ENCODE measurements at regions of chr14 and their contacts with region 1.

Region 1: GRCh38 chr14:99480917-99481744 is at the start of gene CCNK:
- DNase-seq: peak; percentile 100
- ATAC-seq: peak; percentile 93
- H3K4me3 Mint-ChIP-seq: peak within 1 kb of the TSS; percentile 96
- H3K27ac Mint-ChIP-seq: peak within 1 kb of the TSS; percentile 96
- H3K4me1 Mint-ChIP-seq: peaks cover 56% of the 10 kb centered on the region
- H3K27me3 Mint-ChIP-seq: no peaks in the 10 kb centered on the region
- CTCF ChIP-seq: no peak
- total RNA-seq, gene CCNK: 90.2 to 98.8 TPM

Region 2: DNA sequence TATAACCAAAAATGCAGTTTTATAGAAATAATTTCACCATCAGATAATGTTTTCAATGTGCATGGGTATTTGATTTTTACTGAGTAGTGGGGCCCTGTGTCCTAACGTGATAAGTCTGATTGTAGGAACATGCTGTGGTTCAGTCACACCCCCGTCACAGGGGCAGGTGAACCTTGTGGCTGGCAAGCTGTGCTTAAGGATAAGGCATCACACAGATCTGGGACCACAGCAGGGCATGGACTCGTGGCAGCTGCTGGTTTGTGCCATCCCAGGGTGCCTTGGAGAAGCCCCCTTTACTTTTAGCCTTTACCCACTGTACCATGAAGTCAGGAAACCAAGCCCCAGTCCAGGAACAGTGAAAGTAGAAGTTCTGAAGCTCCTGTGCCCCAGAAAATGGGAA is 16.8 kb after region 1 on chr14:
- CTCF ChIA-PET with region 1: no interaction called
- POLR2A ChIA-PET with region 1: interaction called, 14 read pairs
- intact Hi-C with region 1: no loop called
- DNase-seq: no peak
- ATAC-seq: no peak
- H3K4me3 Mint-ChIP-seq: no peak overlapping the region
- H3K27ac Mint-ChIP-seq: no peak overlapping the region
- H3K4me1 Mint-ChIP-seq: no peaks in the 10 kb centered on the region
- H3K27me3 Mint-ChIP-seq: no peaks in the 10 kb centered on the region
- CTCF ChIP-seq: no peak

Region 3: DNA sequence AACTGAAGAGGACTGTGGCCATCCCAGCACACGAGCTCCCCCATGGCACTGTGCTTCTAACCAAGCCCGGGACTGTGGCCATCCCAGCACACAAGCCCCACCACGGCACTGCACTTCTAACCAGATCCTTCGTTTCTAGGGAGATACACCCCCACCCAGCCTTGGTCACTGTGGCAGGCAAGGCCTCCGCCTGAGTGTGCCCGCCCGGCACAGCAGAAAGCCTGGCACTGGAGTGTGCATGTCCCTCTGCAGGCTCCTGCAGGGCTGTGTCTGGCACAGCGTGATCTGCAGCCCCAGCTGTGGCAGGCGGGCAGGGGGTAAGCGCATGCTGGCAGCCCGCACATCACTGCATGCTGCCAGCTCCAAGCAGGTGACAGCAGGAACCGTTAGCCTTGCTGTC is 73.1 kb after region 1 on chr14:
- CTCF ChIA-PET with region 1: no interaction called
- POLR2A ChIA-PET with region 1: no interaction called
- intact Hi-C with region 1: no loop called
- DNase-seq: no peak
- ATAC-seq: no peak
- H3K4me3 Mint-ChIP-seq: no peak overlapping the region
- H3K27ac Mint-ChIP-seq: no peak overlapping the region
- H3K4me1 Mint-ChIP-seq: no peaks in the 10 kb centered on the region
- H3K27me3 Mint-ChIP-seq: no peaks in the 10 kb centered on the region
- CTCF ChIP-seq: no peak

Measured in activated CD8-positive, alpha-beta T cell treated with anti-CD3 and anti-CD28 coated beads for 36 hours (primary cell).